RWPE1 (cell line): ENCODE measurements at regions of chr10 and their contacts with region 1.

Region 1: GRCh38 chr10:80260295-80261243 is 28.9 kb downstream of the MAT1A start:
- DNase-seq: peak; percentile 42
- H3K27ac ChIP-seq: no peak overlapping the region
- CTCF ChIP-seq: peak; percentile 89

Region 2: DNA sequence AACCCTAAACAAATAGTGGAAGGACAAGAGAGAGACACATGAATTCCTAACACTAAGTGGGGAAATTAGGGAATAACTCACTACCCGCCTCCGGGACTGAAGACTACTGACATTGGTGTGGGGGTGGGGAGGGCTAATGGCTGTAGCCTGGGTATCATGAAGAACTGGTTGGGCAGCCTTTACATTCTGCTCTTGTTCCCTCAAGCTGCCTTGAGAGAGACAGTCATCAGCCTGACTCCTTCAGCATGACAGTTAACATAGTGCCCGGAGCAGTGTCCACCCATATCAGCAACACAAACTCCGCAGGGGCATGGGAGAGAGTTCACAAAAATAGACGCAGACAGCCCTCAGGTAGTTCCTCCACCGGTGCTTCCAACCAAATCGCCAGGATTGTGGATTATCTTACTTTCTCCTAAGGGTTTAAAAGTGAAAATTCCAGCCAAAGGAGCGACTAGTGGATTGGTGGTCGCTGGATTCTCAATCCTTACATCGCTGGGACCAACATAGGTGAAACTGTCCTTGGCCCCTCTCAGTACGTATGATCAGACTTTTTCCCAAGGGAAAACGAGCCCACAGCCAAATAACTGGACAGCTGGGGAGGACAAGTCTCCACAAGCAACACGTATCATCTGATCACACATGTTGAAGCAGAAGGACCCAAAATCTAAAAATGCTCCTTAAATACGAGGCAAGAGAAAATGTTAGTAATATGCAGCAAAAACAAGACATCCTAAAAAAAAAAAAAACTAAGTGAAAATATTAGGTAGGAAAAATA is 159.5 kb before region 1 on chr10:
- CTCF ChIA-PET with region 1: interaction called, 10 read pairs
- POLR2A ChIA-PET with region 1: no interaction called
- DNase-seq: peak; percentile 77
- H3K27ac ChIP-seq: no peak overlapping the region
- CTCF ChIP-seq: no peak

Region 3: GRCh38 chr10:80196270-80196949 is 64.2 kb before region 1 on chr10:
- CTCF ChIA-PET with region 1: no interaction called
- POLR2A ChIA-PET with region 1: no interaction called
- DNase-seq: peak; percentile 81
- H3K27ac ChIP-seq: peak overlapping the region; percentile 56
- CTCF ChIP-seq: no peak

Region 4: DNA sequence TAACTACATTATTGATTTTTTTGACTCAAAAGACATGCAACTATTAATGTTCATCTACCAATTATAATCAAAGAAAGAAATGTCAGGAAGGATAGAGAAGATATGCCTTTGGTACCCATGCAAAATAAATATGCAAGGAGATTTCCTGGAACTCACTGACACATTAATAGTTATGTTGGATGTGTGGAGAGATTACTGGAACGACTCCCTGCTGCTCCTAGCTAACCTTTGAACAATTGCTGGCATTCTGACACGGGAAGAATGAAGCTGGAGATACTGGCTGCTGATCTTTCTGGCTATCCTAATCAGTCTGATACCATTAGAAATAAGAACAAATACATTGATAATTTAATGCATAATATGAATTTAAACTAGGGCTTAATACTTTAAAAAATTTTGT is 1106.6 kb after region 1 on chr10:
- CTCF ChIA-PET with region 1: no interaction called
- POLR2A ChIA-PET with region 1: no interaction called
- DNase-seq: no peak
- H3K27ac ChIP-seq: no peak overlapping the region
- CTCF ChIP-seq: no peak